ENCODE measurements at regions of chr10 and their contacts with region 1.

Region 1: GRCh38 chr10:3811291-3811870 is 26.4 kb upstream of the KLF6 start:
- DNase-seq: peak; percentile 65
- H3K4me3 Mint-ChIP-seq: peak overlapping the region; percentile 38
- H3K27ac Mint-ChIP-seq: peak overlapping the region; percentile 96
- H3K4me1 Mint-ChIP-seq: peaks cover 79% of the 10 kb centered on the region
- H3K27me3 Mint-ChIP-seq: no peaks in the 10 kb centered on the region

Region 2: DNA sequence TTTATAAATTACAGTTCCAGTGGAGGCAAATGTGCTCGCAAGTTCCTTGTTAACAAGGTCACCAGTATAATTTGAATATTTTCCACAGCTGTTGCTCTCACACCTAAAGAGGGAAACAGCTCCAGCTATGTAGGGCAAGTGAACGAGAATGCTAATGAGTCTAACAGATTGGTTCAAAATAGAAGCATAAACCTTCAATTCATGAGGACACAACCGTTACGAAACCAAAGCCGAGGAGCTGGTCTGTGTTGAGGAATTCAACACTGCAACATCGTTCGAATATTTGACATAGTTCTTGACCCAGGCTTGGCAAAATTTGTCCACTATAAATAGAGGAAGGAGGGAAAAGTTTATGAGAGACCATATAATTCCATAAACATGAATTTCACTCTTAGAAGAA is 187.6 kb before region 1 on chr10:
- intact Hi-C with region 1: loop called (anchors 2 kb)
- DNase-seq: no peak
- H3K4me3 Mint-ChIP-seq: no peak overlapping the region
- H3K27ac Mint-ChIP-seq: no peak overlapping the region
- H3K4me1 Mint-ChIP-seq: peaks cover 28% of the 10 kb centered on the region
- H3K27me3 Mint-ChIP-seq: peaks cover 17% of the 10 kb centered on the region

Region 3: GRCh38 chr10:3835770-3836169 is 24.4 kb after region 1 on chr10:
- intact Hi-C with region 1: loop called (anchors 1 kb)
- DNase-seq: no peak
- H3K4me3 Mint-ChIP-seq: no peak overlapping the region
- H3K27ac Mint-ChIP-seq: peak overlapping the region; percentile 84
- H3K4me1 Mint-ChIP-seq: peaks cover 56% of the 10 kb centered on the region
- H3K27me3 Mint-ChIP-seq: no peaks in the 10 kb centered on the region

Region 4: GRCh38 chr10:3873728-3874461 is 62.5 kb after region 1 on chr10:
- intact Hi-C with region 1: loop called (anchors 1 kb)
- DNase-seq: no peak
- H3K4me3 Mint-ChIP-seq: no peak overlapping the region
- H3K27ac Mint-ChIP-seq: peak overlapping the region; percentile 84
- H3K4me1 Mint-ChIP-seq: peaks cover 55% of the 10 kb centered on the region
- H3K27me3 Mint-ChIP-seq: no peaks in the 10 kb centered on the region

Region 5: DNA sequence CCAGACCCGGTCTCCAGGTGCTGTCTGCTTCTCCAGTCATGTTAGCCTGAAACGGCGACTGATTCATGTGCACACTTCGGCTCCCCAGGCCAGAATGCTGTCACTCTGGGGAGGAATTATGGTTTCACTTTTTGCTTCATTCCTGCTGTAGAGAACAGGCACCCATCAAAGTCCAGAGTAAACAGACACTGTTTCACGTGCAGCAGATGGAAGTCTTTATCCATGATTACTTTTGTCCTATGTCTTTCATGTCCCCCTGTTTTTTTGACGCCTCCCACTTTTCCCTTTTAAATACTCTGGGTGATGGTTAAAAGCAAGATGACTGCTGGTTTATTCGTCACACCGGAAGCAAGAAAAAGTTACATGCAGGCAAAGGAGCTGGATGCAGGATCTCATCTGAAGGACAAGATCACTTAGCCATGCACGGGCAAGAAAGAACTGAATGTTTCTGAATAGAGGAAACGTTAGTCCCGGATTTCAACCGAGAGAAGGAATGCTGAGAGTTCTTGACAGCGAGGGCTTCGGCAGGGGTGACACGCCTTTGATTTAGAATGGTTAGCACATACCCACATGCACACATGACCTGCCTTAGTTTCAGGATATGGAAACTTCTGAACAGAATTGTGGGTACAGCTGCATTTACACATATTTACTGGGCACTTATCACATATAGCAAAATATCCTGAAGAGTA is 223.7 kb after region 1 on chr10:
- intact Hi-C with region 1: loop called (anchors 1 kb)
- DNase-seq: peak; percentile 15
- H3K4me3 Mint-ChIP-seq: peak overlapping the region; percentile 61
- H3K27ac Mint-ChIP-seq: peak overlapping the region; percentile 84
- H3K4me1 Mint-ChIP-seq: peaks cover 36% of the 10 kb centered on the region
- H3K27me3 Mint-ChIP-seq: peaks cover 2% of the 10 kb centered on the region

Region 6: DNA sequence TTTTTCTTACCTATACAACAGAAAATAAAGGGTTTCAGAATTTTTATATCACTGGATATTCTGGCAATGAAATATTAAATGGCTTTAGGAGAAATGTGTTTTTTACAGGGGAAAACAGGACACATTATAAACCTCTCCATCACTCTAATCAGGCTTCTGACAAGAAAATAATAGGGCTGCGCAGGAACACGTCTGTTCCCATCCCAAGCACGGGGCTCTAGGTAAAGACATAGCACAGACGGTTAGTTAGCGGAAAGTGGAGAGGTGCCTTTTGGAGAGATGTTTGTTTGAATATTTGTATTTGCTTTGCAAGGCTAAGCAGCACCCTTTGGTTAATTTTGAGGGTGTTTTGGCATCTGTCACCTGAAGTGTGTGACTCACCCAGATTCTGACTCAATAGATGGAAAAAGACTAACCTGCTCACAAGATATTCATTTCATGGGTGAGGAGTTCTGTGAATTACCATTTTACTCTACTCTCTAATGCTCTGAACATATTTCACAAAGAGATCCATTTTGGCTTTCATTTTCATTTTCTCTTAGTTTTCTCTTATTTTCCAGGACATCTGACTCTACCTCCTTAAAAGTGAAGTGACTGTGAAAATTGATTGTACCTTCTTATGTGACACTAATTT is 840.1 kb after region 1 on chr10:
- intact Hi-C with region 1: loop called (anchors 1 kb)
- DNase-seq: no peak
- H3K4me3 Mint-ChIP-seq: no peak overlapping the region
- H3K27ac Mint-ChIP-seq: peak overlapping the region; percentile 83
- H3K4me1 Mint-ChIP-seq: peaks cover 25% of the 10 kb centered on the region
- H3K27me3 Mint-ChIP-seq: peaks cover 12% of the 10 kb centered on the region